ENCODE measurements at regions of chr2 and their contacts with region 1.

Region 1: GRCh38 chr2:225002039-225002655 is 40.1 kb downstream of the DOCK10 start:
- DNase-seq: peak in 2 of 10 donors; percentile 25 to 63

Region 2: GRCh38 chr2:224749136-224749535 is 253.0 kb before region 1 on chr2:
- intact Hi-C with region 1: no loop called
- DNase-seq: no peak

Region 3: DNA sequence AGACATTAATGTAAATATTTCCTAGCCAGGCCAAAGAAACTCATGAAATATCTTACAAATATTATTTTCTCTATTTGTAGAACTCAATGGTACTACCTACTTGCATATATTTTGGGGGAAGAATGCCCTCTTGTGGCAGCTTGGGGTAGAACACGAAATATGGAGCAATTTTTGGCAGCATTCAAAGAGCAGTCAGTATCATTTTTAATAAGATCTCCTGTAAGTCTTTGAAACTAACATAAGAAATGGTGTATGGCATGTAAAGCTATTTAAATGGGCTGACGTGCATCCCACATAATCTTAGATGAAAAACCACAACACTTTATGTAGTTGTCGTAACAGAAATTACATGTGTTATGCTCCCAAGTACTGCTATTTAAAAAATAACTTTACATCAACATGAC is 223.7 kb before region 1 on chr2:
- intact Hi-C with region 1: loop called (anchors 10 kb)
- DNase-seq: peak in 5 of 10 donors; percentile 12 to 61 (median 52)

Region 4: GRCh38 chr2:224837558-224837957 is 164.6 kb before region 1 on chr2:
- intact Hi-C with region 1: loop called (anchors 10 kb)
- DNase-seq: no peak

Region 5: GRCh38 chr2:224847961-224848850 is 153.9 kb before region 1 on chr2:
- intact Hi-C with region 1: no loop called
- DNase-seq: peak in 2 of 10 donors; percentile 37 to 52

Region 6: DNA sequence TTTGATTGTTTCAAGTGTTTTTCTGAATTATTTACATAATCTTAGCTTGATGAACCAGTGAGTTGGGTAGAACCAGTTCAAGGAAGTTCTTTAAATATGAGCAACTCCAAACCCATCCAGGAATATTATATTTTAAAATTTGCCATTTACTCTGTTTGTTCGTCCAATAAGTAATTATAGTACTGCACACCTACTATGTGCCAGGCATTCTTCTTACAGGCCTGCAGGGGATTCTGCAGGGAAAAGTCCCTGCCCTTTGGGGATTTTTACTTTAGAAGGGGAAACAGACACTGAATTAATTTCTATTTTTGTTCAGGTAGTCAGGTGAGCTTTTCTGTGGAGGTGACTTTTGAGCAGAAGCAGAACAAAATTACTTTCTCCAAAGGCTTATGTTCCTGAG is 106.8 kb before region 1 on chr2:
- intact Hi-C with region 1: no loop called
- DNase-seq: no peak